ENCODE measurements at regions of chr5 and their contacts with region 1.

Region 1: DNA sequence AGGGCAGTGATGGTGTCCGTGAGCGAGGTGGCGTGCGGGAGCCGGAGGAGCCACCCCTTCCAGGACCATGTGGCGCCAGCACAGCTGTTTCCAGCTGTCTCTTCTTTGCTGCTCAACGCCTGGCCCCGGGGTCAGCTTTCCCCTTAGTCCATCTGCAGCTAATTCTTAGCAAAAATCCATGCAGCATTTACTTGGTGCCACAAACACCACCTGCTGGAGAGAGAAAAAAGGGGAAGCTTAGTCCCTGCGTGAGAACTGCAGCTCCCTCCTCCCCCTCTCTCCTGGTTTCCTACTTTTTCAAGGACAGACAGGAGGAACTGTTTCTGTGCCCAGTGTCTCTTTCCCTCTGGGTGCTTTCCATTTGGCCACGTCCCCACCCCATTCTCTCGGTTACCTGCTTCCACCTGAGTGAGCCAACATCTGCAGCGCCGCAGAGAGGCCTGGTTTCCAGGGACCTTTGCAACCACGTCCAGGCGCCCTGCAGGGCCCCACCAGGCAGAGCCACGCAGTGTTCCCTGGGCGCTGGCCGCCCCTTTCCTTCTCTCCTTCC is 3.4 kb downstream of the SLC6A19 start:
- DNase-seq: peak in 1 of 2 experiments; percentile 37
- H3K4me3 ChIP-seq: no peak overlapping the region
- H3K27ac ChIP-seq: no peak overlapping the region
- H3K4me1 ChIP-seq: no peaks in the 10 kb centered on the region
- H3K27me3 ChIP-seq: peaks cover 99% of the 10 kb centered on the region
- CTCF ChIP-seq: peak; percentile 60

Region 2: DNA sequence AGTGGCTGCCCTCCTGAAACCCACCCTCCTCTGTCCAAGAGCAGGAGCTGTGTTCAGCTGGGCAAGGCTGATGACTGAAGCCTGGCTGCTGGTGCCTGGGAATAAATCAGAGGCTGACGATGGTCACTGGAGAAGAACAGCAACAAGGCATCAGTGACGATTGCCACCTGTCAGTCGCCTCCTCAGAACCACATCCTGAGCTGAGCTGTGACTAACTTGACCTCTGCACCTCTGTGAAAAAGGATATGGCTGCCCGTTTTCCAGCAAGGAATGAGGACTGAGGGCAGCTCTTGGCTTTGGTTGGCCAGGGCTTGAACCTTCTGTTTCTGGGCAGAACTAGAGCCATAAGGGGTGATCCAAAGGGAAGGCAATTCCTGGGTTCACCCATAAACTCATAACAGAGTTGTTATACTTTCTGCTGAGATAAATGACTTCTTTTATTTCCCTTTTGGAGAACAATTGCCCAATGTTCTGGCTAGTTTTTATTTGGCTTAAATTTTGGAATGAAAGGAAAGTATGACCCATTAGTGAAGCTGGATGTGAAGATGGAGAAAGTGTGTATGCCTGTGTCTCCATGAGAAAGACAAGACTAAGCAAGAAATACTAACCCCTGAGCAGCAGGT is 272.0 kb before region 1 on chr5:
- CTCF ChIA-PET with region 1: interaction called, 19 read pairs
- POLR2A ChIA-PET with region 1: no interaction called
- intact Hi-C with region 1: no loop called
- DNase-seq: no peak
- H3K4me3 ChIP-seq: no peak overlapping the region
- H3K27ac ChIP-seq: no peak overlapping the region
- H3K4me1 ChIP-seq: 0 out of 2 replicates have a peak, but pooled peaks cover 6% of the 10 kb centered on the region
- H3K27me3 ChIP-seq: peaks cover 46% of the 10 kb centered on the region
- CTCF ChIP-seq: no peak

Region 3: DNA sequence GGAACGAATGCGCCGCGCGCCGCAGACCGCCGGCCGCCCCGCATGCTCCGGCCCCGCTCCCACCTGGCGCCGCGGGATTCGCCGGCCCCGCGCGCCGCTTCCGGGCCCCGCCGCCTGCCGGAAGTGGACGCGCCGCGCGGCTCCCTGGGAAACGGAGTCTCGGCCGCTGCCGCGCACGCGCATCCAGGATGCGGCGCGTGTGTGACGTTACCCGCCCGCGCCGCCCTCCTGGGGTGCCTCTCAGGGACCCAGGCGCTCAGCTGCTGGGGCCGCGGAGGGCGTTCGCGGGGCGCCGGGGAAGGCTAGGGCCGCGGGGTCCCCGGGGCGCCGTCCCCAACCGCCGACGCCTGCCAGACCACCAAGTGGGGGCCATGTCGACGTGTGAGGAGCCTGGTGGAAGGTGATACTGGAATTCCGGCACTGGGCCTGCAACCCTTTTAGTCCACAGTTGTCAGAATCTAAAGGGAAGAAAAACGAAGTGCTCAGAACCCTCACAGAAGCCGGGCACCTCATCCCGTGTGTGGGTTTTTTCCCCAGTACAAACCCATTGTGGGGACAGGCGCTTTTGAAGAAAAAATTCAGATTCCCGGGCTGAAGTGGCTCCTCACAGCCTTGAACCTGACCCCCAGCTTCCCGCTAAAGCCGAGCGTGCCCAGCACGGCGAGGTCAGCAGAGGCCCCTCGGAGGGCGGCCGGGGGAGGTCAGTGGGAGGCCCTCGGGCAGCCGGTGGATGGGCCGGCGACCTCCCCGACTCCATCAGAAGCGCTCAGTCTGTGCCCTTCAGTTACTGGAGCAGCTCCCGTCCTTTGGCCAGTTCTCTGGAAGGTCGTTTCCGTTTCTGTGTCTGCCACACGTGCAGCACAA is 140.4 kb after region 1 on chr5 and contains the start of gene CLPTM1L:
- CTCF ChIA-PET with region 1: no interaction called
- POLR2A ChIA-PET with region 1: no interaction called
- intact Hi-C with region 1: loop called (anchors 10 kb)
- DNase-seq: peak; percentile 78 to 96
- H3K4me3 ChIP-seq: peak within 1 kb of the TSS; percentile 90
- H3K27ac ChIP-seq: 0 out of 2 replicates have a peak within 1 kb of the TSS, but pooled peaks have one; percentile 10
- H3K4me1 ChIP-seq: peaks cover 18% of the 10 kb centered on the region
- H3K27me3 ChIP-seq: no peaks in the 10 kb centered on the region
- CTCF ChIP-seq: no peak
- total RNA-seq, gene CLPTM1L: 260 and 266 TPM in 2 replicates

Region 4: DNA sequence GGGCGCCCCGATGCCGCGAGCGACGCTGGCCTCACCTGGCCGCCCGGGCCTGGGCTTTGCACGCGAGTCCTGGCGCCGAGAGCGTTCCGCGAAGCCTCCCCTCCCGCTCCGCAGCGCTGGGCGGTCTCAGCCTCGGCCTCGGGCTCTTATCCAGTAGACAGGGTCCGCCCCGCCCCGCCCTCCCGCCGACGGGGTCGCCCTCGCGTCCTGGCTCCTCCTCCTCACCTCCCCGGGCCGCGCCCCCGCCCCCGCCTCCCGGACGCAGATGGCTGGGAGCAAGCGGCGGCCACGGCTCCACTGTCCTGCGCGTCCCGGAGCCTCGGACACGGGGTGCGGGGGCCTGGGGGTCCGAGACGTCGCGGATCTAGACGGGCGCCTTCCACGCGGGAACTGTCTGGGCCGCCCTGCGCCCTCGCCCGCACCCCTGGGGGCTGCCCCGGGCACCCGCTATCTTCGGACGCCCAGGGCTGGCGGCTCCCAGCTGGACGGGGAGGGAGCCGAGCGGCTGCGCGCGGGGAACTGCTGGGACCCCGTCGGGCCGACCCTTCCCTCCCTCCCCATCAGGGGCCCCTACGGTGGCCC is 240.6 kb after region 1 on chr5 and contains the start of gene SLC6A3:
- CTCF ChIA-PET with region 1: no interaction called
- POLR2A ChIA-PET with region 1: no interaction called
- intact Hi-C with region 1: loop called (anchors 10 kb)
- DNase-seq: no peak
- H3K4me3 ChIP-seq: no peak within 1 kb of the TSS
- H3K27ac ChIP-seq: no peak within 1 kb of the TSS
- H3K4me1 ChIP-seq: no peaks in the 10 kb centered on the region
- H3K27me3 ChIP-seq: peaks cover 85% of the 10 kb centered on the region
- CTCF ChIP-seq: no peak
- total RNA-seq, gene SLC6A3: not detected in 2 replicates

Region 5: GRCh38 chr5:1503241-1504068 is 298.7 kb after region 1 on chr5:
- CTCF ChIA-PET with region 1: no interaction called
- POLR2A ChIA-PET with region 1: no interaction called
- intact Hi-C with region 1: no loop called
- DNase-seq: no peak
- H3K4me3 ChIP-seq: no peak overlapping the region
- H3K27ac ChIP-seq: no peak overlapping the region
- H3K4me1 ChIP-seq: no peaks in the 10 kb centered on the region
- H3K27me3 ChIP-seq: no peaks in the 10 kb centered on the region
- CTCF ChIP-seq: no peak

Measured in PC-9 (cell line).